Activated CD8-positive, alpha-beta T cell treated with anti-CD3 and anti-CD28 coated beads, Interleukin-2, amount 10 ng/mL, durations not matched to agents 7 days and 5 days (primary cell): ENCODE measurements at regions of chr12 and their contacts with region 1.

Region 1: DNA sequence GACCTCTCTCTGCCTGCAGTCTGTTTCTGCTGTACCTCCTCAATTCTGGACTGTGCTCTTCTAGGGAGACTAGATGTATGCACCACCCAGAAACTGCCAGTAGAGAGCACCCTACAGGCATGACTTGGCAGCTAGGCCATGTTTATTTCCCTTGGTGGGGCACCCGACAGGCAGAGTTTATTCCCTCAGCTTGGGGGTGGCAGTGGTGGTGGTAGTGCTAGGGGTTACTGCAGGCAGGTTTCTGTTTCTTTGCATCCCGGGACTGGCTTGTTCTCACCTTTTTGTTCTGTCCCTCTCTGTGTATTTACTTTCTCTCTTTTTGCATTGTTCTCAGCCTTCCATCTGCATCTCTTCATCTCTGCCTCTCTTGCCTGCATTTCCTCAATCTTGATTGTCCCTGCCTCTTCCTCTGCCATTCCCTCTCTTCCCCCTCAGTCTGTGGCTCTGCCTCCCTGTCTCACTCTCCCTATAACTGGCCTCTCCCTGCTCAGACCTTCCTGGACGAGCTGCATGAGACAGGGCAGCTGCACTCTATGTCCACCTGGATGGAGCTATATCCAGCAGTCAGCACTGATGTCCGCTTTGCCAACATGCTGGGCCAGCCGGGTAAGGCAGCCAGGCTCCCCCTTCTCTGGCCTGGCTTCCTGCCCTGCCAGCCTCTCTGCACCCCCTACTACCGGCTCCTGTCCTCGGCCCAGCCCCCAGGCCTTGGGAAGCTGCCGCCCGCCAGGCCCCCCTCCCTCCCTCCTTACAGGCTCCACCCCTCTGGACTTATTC is 13.8 kb downstream of the PRPF40B start:
- DNase-seq: peak; percentile 79
- ATAC-seq: peak; percentile 89
- H3K4me3 Mint-ChIP-seq: no peak overlapping the region
- H3K27ac Mint-ChIP-seq: peak overlapping the region; percentile 28
- H3K4me1 Mint-ChIP-seq: peaks cover 31% of the 10 kb centered on the region
- H3K27me3 Mint-ChIP-seq: no peaks in the 10 kb centered on the region

Region 2: DNA sequence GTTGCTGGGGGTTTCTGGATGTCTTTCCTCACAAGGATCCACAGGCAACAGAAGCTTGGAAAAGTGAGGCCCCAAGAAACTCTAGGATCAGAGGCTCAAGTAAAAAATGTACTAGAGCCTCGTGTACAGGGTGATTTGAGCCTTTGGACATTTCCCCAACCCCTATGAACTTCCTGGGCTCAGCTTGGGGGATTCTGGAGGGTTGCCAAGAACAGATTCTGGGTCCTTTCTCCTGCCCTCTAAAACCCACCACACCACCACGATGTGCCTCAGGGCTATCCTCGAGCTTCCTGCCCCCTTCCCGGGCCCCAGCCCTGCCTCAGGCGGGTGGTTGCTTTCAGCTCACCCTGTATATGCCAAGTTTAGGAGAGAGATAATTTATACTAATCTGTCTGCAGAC is 32.3 kb before region 1 on chr12:
- CTCF ChIA-PET with region 1: no interaction called
- POLR2A ChIA-PET with region 1: no interaction called
- DNase-seq: no peak
- ATAC-seq: no peak
- H3K4me3 Mint-ChIP-seq: no peak overlapping the region
- H3K27ac Mint-ChIP-seq: no peak overlapping the region
- H3K4me1 Mint-ChIP-seq: peaks cover 8% of the 10 kb centered on the region
- H3K27me3 Mint-ChIP-seq: no peaks in the 10 kb centered on the region

Region 3: DNA sequence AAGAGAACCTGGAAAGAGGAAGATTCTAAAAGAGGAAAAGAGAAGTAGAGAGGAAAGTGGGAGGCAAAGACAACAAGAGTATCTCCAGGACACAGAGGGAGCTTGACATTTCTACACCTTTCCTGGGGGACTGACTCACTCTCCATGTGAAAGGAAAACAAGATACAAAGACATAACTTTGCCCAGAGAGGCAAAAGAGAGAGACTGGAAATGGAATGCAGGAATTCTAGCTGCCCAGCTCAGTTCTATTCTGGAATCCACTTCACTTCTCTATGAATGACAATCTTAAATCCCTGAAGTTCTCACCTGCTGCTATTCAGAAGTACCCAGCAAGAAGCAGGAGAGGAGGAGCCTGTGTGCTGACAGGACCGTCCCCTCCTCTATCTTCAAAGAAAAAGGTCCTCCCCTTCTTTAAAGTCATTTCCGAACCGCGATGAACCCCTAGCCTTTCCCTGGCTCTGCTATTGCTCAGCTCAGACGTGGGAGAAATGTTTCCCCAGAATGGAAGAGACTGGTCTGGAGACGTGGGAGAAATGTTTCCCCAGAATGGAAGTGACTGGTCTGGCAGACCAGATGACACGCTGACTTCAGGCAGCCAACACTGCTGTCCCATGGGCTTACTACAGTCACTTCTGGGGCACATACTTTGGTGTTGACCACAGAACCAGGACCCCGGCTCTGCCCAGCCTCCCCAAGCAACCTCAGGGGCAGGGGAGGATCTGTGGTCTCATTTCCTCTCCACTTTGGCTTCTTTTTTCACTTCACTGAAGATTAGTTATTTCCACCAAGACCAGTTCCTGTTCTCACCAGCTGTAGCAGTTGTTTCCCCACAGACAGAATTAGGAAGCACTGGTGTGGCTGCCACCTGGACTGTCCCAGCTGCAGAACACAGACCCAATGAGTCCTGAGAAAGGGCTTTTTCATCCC is 61.7 kb after region 1 on chr12:
- CTCF ChIA-PET with region 1: interaction called, 695 read pairs
- POLR2A ChIA-PET with region 1: no interaction called
- DNase-seq: peak; percentile 68
- ATAC-seq: peak; percentile 78
- H3K4me3 Mint-ChIP-seq: peak overlapping the region; percentile 76
- H3K27ac Mint-ChIP-seq: peak overlapping the region; percentile 92
- H3K4me1 Mint-ChIP-seq: peaks cover 58% of the 10 kb centered on the region
- H3K27me3 Mint-ChIP-seq: no peaks in the 10 kb centered on the region